Endothelial cell of umbilical vein (primary cell): ENCODE measurements at regions of chr1 and their contacts with region 1.

Region 1: DNA sequence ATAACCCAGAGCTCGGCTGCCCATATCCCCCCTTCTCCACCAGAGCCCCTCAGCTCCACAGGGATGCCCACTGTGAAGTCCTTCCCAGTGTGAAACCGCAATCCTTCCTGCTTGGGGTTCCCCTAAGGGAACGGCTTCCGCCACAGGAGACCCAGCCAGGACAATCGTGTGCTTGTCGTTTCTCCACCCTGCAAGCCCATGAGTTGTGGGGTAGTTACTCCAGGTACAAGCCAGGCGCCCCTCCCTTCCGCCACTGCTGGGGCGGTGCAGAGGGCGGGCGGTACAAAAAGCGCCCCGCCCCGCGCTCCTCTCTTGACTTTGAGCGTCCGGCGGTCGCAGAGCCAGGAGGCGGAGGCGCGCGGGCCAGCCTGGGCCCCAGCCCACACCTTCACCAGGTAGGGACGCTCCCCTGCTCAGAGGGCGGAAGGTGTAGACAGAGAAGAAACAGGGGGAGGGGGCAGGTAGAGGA is at the start of gene TINAGL1:
- DNase-seq: peak; percentile 48
- H3K4me3 ChIP-seq: peak within 1 kb of the TSS; percentile 76 to 90 (median 87)
- H3K27ac ChIP-seq: peak within 1 kb of the TSS; percentile 88
- H3K4me1 ChIP-seq: peaks cover 61% of the 10 kb centered on the region
- H3K27me3 ChIP-seq: no peaks in the 10 kb centered on the region
- CTCF ChIP-seq: no peak
- POLR2A ChIP-seq: peak; percentile 71
- total RNA-seq, gene TINAGL1: 298 and 312 TPM in 2 replicates

Region 2: DNA sequence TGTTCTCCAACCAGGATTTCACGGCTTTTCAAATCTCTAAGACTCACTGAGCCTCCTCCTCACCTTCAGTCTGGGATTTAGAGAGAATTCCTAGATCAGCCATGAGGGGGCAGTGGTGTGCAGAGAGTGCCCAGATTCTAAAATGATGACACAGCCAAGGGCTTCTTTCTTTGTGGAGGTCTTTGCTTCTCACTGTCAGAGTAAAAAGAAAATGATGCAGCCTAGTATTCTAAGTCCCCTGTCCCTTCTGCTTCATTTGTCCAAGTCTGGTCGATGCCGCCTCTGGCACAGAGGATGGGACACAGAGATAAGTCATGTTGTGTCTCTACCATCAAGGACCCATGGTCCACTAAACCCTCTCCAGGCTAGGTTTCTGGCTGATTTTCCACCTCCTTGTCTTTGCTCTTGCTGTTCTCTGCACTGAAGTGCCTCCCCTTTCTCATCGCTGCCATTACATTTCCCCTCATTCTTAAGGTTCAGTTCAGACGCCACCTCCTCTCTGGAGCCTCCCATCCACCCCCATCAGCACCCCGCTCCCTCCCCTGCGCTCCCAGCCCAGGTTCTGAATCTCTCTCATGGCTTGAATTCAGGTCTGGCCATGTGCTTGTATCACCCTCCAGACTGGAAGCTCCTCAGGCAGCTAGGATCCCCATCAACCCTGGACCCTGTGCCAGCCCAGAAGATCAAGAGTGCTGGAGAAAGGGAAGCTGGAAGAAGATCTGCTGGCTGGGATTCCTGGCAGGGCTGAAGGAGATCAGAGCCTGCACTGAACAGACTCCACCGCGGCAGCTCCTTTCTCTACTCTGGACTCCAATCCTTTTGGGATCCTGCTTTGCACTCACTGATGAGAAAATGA is 11.9 kb before region 1 on chr1:
- CTCF ChIA-PET with region 1: interaction called, 8 read pairs
- POLR2A ChIA-PET with region 1: no interaction called
- dilution Hi-C with region 1: no loop called
- intact Hi-C with region 1: loop called (anchors 1 kb)
- DNase-seq: peak; percentile 83
- H3K4me3 ChIP-seq: no peak overlapping the region
- H3K27ac ChIP-seq: no peak overlapping the region
- H3K4me1 ChIP-seq: peaks cover 19% of the 10 kb centered on the region
- H3K27me3 ChIP-seq: no peaks in the 10 kb centered on the region
- CTCF ChIP-seq: peak; percentile 74 to 76
- POLR2A ChIP-seq: no peak

Region 3: DNA sequence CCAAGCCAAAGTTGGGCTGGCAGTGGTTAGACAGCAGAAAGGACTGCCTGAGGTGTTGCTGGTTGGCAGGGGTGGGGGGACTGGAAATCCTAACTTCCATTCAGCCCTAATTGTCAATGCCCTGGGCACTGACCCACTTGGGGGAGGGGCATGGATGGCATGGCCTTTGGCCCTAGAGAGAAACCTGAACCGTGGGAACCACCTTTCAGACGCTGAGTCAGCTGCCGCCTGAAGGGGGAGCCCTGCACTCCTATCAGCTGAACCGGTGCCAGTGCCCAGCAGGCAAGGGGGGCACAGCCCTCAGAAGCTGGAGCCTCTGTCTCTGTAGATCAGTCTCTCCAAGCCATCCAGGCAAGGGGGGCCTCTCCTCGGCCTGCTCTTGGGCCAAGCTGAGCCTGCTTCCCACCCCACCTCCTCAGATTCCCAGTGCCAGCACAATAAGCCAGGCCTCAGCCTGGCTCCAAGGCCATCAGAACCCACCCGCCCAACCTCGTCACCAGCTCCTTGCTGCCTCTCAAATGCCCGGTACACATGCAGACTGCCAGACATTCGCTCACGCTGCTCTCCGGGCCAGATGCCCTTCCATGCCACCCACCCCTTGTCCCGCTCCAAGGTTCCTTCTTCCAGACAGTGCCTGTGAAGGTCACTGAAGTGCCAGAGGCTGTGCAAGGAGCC is 11.6 kb after region 1 on chr1:
- CTCF ChIA-PET with region 1: interaction called, 15 read pairs
- POLR2A ChIA-PET with region 1: interaction called, 4 read pairs
- dilution Hi-C with region 1: no loop called
- intact Hi-C with region 1: loop called (anchors 1 kb)
- DNase-seq: peak; percentile 86
- H3K4me3 ChIP-seq: no peak overlapping the region
- H3K27ac ChIP-seq: peak overlapping the region; percentile 92
- H3K4me1 ChIP-seq: peaks cover 39% of the 10 kb centered on the region
- H3K27me3 ChIP-seq: no peaks in the 10 kb centered on the region
- CTCF ChIP-seq: peak; percentile 71 to 92
- POLR2A ChIP-seq: peak; percentile 81

Region 4: DNA sequence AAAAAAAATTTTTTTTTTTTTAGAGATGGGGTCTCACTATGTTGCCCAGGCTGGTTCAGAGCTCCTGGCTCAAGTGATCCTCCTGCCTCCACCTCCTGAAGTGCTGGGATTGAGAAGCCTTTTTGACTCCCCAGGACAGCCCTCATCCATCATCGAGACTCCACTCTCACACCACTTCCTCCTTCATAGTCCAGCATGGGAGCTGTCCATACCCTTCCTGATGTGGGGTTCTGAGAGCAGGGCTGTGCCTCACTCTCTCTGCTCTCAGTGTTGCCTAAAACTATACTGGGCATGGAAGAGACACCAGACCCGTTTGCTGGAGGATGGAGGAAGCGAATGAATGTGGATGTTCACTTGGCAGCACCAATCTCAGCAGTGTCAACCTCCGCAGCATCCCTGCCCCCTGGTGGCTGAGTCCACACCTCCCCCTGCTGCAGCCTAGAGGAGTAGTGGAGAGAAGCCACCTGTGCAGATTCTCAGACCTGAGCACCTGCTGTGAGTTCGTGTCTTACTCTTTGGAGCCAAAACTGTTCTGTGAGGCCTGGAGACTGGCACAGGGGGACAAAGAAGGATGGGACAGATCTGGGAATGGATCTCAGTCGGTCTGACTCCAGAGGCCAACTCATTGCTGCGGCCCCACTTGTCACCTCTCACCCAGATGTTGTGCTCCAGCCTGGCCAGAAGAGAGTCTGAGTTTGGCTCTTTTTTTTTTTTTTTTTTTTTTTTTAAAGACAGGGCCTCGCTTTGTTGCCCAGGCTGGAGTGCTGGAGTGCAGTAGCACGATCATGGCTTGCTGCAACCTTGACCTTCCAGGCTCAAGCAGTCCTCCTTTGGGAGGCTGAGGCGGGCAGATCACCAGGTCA is 17.8 kb after region 1 on chr1:
- CTCF ChIA-PET with region 1: interaction called, 15 read pairs
- POLR2A ChIA-PET with region 1: no interaction called
- dilution Hi-C with region 1: no loop called
- intact Hi-C with region 1: loop called (anchors 1 kb)
- DNase-seq: peak; percentile 73
- H3K4me3 ChIP-seq: no peak overlapping the region
- H3K27ac ChIP-seq: no peak overlapping the region
- H3K4me1 ChIP-seq: peaks cover 28% of the 10 kb centered on the region
- H3K27me3 ChIP-seq: no peaks in the 10 kb centered on the region
- CTCF ChIP-seq: peak; percentile 95 to 96
- POLR2A ChIP-seq: no peak

Region 5: DNA sequence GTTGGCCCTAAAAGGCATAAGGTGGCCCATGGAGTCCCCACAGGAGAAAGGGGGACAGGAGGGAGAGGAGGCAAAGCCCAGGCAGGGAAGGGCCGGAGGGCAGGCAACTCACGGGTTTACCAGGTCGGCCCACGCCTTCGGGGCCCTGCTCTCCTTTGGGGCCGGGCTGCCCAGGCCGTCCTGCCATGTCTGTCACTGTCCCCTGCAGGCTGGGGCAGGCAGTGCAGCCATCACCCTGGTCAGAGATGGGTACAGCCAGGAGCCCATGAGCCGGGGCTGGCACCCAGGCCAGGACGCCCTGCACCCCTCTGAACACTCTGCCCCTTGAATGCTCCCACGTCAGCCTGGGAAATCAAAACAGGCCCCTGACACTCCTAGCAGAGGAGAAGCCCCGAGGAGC is 107.8 kb after region 1 on chr1:
- CTCF ChIA-PET with region 1: no interaction called
- POLR2A ChIA-PET with region 1: no interaction called
- dilution Hi-C with region 1: no loop called
- intact Hi-C with region 1: no loop called
- DNase-seq: no peak
- H3K4me3 ChIP-seq: no peak overlapping the region
- H3K27ac ChIP-seq: no peak overlapping the region
- H3K4me1 ChIP-seq: peaks cover 19% of the 10 kb centered on the region
- H3K27me3 ChIP-seq: no peaks in the 10 kb centered on the region
- CTCF ChIP-seq: peak; percentile 30 to 56
- POLR2A ChIP-seq: no peak

Region 6: DNA sequence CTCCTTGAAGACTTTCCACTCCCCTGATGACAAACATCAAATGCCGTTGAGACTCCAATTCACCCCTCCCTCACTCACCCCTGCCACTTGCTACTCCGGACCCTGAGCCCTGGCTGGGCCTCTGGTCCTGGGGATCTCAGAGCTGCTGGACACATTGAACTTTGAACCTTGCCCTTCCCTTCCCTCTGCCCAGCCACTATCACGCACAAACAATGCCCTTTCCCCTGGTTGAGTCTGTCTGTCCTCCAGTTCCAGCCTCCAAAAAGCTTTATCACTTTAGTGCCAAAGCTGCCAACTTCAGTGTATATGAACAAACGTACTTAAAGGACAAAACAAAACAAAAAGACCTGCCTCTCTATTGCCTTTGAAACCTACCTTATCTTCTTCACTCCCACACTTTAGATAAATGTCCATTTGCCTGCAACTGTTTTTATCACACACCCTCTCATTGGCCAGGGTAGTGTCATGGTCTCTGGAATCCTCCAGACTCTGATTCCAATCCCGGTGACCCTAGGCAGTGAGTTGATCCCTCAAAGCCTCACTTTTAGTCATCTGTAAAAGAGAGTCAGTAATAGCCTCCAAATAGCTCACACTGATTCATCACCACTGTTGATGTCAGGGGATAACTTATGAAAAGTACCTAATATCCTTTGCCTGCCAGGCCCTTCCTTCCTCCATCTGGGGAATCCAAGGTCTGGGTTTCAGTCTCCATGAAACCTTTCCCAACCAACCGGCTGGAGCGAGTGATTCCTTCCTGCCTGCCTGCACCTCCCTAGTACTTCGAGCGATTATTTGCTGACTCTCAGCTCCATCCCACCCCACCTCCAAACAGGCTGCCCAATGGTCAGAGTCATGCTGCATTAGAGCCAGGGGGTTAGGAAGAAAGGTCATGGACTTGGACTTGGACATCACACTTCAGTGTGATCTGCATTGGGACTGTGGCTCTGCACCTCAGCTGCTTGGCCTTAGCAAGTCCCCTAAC is 255.5 kb after region 1 on chr1:
- CTCF ChIA-PET with region 1: no interaction called
- POLR2A ChIA-PET with region 1: no interaction called
- dilution Hi-C with region 1: no loop called
- intact Hi-C with region 1: no loop called
- DNase-seq: no peak
- H3K4me3 ChIP-seq: no peak overlapping the region
- H3K27ac ChIP-seq: no peak overlapping the region
- H3K4me1 ChIP-seq: no peaks in the 10 kb centered on the region
- H3K27me3 ChIP-seq: peaks cover 3 to 6% of the 10 kb centered on the region in 2 experiments
- CTCF ChIP-seq: no peak
- POLR2A ChIP-seq: no peak